Spleen (tissue), 13 donors: ENCODE measurements at regions of chr6 and their contacts with region 1.

Region 1: GRCh38 chr6:29589423-29590048 is 4.6 kb downstream of the OR2H2 start:
- DNase-seq: no peak
- H3K4me3 ChIP-seq: no peak overlapping the region
- H3K27ac ChIP-seq: no peak overlapping the region
- H3K4me1 ChIP-seq: peaks cover 0 to 13% (median 2%) of the 10 kb centered on the region in 6 donors
- H3K27me3 ChIP-seq: peaks cover 0 to 55% (median 0%) of the 10 kb centered on the region in 7 donors
- CTCF ChIP-seq: peak; percentile 76 to 94 (median 91)
- POLR2A ChIP-seq: no peak

Region 2: GRCh38 chr6:28695715-28696114 is 893.8 kb before region 1 on chr6:
- intact Hi-C with region 1: loop called (anchors 10 kb)
- DNase-seq: no peak
- H3K4me3 ChIP-seq: no peak overlapping the region
- H3K27ac ChIP-seq: no peak overlapping the region
- H3K4me1 ChIP-seq: peaks cover 0 to 6% (median 0%) of the 10 kb centered on the region in 6 donors
- H3K27me3 ChIP-seq: peaks cover 0 to 99% (median 55%) of the 10 kb centered on the region in 7 donors
- CTCF ChIP-seq: no peak
- POLR2A ChIP-seq: no peak

Region 3: DNA sequence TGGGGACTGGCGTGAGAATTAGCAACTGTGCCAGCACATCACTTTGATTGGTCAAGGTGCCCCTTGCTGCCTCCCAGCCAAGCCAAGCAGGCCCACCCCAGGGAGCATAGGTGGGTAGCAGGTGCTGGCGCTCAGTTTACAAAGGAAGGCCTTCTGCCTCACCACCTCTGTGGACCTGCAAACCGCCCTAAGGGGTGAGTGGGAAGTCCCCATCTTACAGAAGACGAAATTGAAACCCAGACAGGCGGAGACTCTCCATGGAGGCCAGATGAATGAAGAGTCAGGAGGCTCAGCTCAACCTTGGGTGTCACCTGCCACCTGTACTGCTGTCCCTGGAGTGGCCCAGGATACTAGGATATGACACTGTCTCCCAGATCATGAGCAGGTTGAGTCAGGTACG is 80.3 kb before region 1 on chr6:
- intact Hi-C with region 1: no loop called
- DNase-seq: no peak
- H3K4me3 ChIP-seq: no peak overlapping the region
- H3K27ac ChIP-seq: no peak overlapping the region
- H3K4me1 ChIP-seq: no peaks in the 10 kb centered on the region
- H3K27me3 ChIP-seq: no peaks in the 10 kb centered on the region
- CTCF ChIP-seq: no peak
- POLR2A ChIP-seq: no peak